ENCODE measurements at regions of chr4 and their contacts with region 1.

Region 1: GRCh38 chr4:114659386-114660008 is 60.9 kb downstream of the UGT8 start:
- DNase-seq: peak; percentile 55 to 91 (median 78)
- H3K4me3 ChIP-seq: peak overlapping the region in 34 of 59 donors; percentile 1 to 50 (median 23)
- H3K27ac ChIP-seq: peak overlapping the region in 57 of 59 donors; percentile 40 to 99 (median 84)
- H3K27me3 ChIP-seq: peaks cover 0 to 7% (median 0%) of the 10 kb centered on the region in 45 donors
- CTCF ChIP-seq: peak; percentile 72 to 96 (median 89)

Region 2: GRCh38 chr4:114318309-114318708 is 341.2 kb before region 1 on chr4:
- intact Hi-C with region 1: no loop called
- DNase-seq: no peak
- H3K4me3 ChIP-seq: no peak overlapping the region
- H3K27ac ChIP-seq: no peak overlapping the region
- H3K27me3 ChIP-seq: no peaks in the 10 kb centered on the region
- CTCF ChIP-seq: no peak

Region 3: DNA sequence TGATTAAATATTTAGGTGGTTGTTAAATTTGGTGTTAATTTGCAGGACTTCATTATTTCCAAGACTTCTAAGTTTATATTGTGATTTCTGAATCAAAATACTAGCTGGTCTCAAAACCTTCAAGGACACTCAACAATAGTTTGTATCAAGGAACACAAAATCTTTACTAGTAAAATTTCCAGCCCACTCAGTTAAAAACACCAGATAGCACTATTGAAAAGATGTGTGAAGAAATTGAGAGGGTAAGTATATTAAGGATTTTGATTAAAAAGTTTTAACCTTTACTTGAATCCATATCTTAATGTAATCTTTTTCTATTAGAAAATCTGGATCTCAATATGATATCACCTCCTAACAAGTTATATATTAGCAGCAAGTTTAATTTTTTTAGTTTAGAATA is 150.2 kb before region 1 on chr4:
- intact Hi-C with region 1: loop called in 1 of 2 experiments (anchors 2 kb)
- DNase-seq: no peak
- H3K4me3 ChIP-seq: no peak overlapping the region
- H3K27ac ChIP-seq: peak overlapping the region in 5 of 59 donors; percentile 16 to 67 (median 52)
- H3K27me3 ChIP-seq: peaks cover 0 to 5% (median 0%) of the 10 kb centered on the region in 45 donors
- CTCF ChIP-seq: peak in 49 of 56 donors; percentile 24 to 73 (median 46)

Region 4: DNA sequence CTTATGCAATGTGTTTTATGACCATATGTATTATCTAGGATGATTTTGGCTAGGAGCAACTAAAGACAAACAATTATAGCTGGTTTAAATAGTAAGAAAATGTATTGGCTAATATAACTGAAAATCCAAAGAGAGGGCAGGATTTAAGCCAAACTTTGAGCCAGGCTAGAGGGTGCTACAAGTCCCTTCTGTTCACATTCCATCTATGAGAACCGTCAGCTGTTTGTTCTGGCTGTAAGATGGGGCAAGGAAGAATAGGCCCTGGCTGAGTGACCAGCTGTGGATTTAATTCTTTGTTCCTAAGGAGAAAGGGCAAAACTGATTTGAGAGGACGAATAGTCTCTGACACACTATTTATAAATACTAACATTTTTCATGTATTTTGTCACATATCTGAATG is 140.1 kb before region 1 on chr4:
- intact Hi-C with region 1: no loop called
- DNase-seq: no peak
- H3K4me3 ChIP-seq: no peak overlapping the region
- H3K27ac ChIP-seq: peak overlapping the region in 48 of 59 donors; percentile 4 to 81 (median 56)
- H3K27me3 ChIP-seq: no peaks in the 10 kb centered on the region
- CTCF ChIP-seq: peak in 31 of 56 donors; percentile 9 to 58 (median 31)

Region 5: DNA sequence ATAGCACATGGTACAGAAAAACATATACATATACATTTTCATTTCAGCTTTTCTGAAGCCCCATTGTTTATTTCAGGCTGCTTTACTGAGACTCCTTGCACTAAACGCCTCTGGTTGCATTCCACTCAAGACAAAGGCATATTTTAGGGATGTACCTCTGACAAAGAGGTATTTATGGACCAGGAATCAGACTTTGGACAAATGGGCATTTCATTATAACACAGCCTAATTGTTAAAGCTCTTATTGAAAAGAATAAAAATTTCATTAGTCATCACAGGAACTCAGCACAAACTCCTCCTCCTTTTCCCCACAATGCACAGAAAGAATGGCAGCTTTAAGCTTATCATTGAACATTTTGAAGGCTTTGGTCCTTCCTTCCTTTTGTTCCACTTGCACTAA is 123.8 kb before region 1 on chr4:
- intact Hi-C with region 1: loop called (anchors 10 kb)
- DNase-seq: no peak
- H3K4me3 ChIP-seq: peak overlapping the region in 3 of 59 donors; percentile 2 to 14 (median 3)
- H3K27ac ChIP-seq: peak overlapping the region in 58 of 59 donors; percentile 19 to 97 (median 86)
- H3K27me3 ChIP-seq: no peaks in the 10 kb centered on the region
- CTCF ChIP-seq: peak in 2 of 56 donors; percentile 14 to 20

Region 6: DNA sequence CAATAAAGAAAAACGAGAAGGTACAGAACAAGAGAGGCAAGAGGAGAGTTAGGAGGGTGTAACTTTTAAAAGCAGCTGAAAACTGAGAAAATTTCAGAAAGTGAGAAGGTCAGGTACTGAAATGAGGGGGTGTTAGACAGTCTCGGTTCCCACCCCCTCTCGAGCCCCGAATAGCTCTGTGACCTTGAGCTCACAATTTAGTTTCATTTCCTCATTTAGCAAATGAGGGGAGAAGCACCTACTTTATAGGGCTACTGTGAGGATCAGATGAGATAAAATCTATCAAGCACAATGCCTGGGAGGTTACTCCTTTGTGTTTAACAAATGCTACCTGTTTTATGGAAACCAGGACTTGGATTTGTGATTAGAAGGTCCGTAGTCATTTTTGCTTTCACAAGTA is 56.0 kb before region 1 on chr4:
- intact Hi-C with region 1: loop called (anchors 1 to 2 kb)
- DNase-seq: no peak
- H3K4me3 ChIP-seq: peak overlapping the region in 51 of 59 donors; percentile 2 to 86 (median 41)
- H3K27ac ChIP-seq: peak overlapping the region in 55 of 59 donors; percentile 15 to 98 (median 92)
- H3K27me3 ChIP-seq: peaks cover 0 to 13% (median 0%) of the 10 kb centered on the region in 45 donors
- CTCF ChIP-seq: no peak